ENCODE measurements at regions of chr19 and their contacts with region 1.

Region 1: GRCh38 chr19:1113033-1113985 is 9.5 kb downstream of the GPX4 start:
- DNase-seq: peak; percentile 97 to 98
- ATAC-seq: peak; percentile 87 to 95 (median 93)
- H3K4me3 ChIP-seq: peak overlapping the region in 6 of 10 donors; percentile 9 to 40 (median 21)
- H3K27ac ChIP-seq: peak overlapping the region in 9 of 10 donors; percentile 40 to 79 (median 71)
- H3K4me1 ChIP-seq: peaks cover 12 to 31% (median 19%) of the 10 kb centered on the region in 9 donors
- H3K27me3 ChIP-seq: no peaks in the 10 kb centered on the region
- CTCF ChIP-seq: peak in 8 of 9 donors; percentile 88 to 100 (median 96)

Region 2: GRCh38 chr19:1026189-1027019 is 86.9 kb before region 1 on chr19 and contains the start of gene CNN2:
- intact Hi-C with region 1: no loop called
- DNase-seq: peak; percentile 78 to 82
- ATAC-seq: peak; percentile 55 to 89 (median 77)
- H3K4me3 ChIP-seq: peak within 1 kb of the TSS; percentile 63 to 97 (median 90)
- H3K27ac ChIP-seq: peak within 1 kb of the TSS; percentile 86 to 99 (median 97)
- H3K4me1 ChIP-seq: peaks cover 14 to 59% (median 45%) of the 10 kb centered on the region in 9 donors
- H3K27me3 ChIP-seq: no peaks in the 10 kb centered on the region
- CTCF ChIP-seq: no peak
- total RNA-seq, gene CNN2: 33.0 to 117 (median 63.5) TPM

Region 3: GRCh38 chr19:1151917-1152617 is 38.8 kb after region 1 on chr19:
- intact Hi-C with region 1: loop called in 1 of 10 experiments (anchors 2 kb)
- DNase-seq: peak; percentile 61 to 84
- ATAC-seq: peak; percentile 53 to 82 (median 68)
- H3K4me3 ChIP-seq: peak overlapping the region in 8 of 10 donors; percentile 4 to 37 (median 27)
- H3K27ac ChIP-seq: peak overlapping the region; percentile 4 to 93 (median 76)
- H3K4me1 ChIP-seq: peaks cover 29 to 68% (median 60%) of the 10 kb centered on the region in 9 donors
- H3K27me3 ChIP-seq: no peaks in the 10 kb centered on the region
- CTCF ChIP-seq: no peak

Region 4: GRCh38 chr19:1173845-1174809 is 60.8 kb after region 1 on chr19 and contains the start of gene SBNO2:
- intact Hi-C with region 1: loop called in 1 of 10 experiments (anchors 5 kb)
- DNase-seq: peak; percentile 87 to 93
- ATAC-seq: peak; percentile 78 to 92 (median 87)
- H3K4me3 ChIP-seq: peak within 1 kb of the TSS; percentile 71 to 96 (median 80)
- H3K27ac ChIP-seq: peak within 1 kb of the TSS; percentile 70 to 98 (median 92)
- H3K4me1 ChIP-seq: peaks cover 0 to 74% (median 20%) of the 10 kb centered on the region in 9 donors
- H3K27me3 ChIP-seq: no peaks in the 10 kb centered on the region
- CTCF ChIP-seq: no peak
- total RNA-seq, gene SBNO2: 12.6 to 61.3 (median 16.1) TPM

Region 5: DNA sequence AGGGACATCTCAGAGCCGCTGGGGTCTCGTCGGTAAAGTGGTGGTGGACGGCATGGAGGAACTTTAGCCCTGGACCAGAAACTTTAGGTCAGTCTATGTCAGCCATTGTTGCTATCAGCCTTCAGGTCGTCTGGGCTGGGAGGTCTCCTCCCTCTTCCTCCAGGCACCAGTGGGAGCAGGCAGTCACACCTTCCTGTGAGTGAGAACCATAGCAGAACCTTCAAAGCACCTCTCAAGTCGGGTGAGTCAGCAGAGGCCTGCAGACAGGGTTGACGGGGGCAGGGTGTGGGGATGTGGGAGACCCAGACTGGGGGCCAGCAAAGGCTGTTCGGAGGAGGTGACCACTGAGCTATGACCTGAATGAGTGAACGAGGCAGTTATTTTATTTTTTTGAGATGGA is 76.1 kb after region 1 on chr19:
- intact Hi-C with region 1: loop called in 9 of 10 experiments (anchors 5 kb)
- DNase-seq: no peak
- ATAC-seq: no peak
- H3K4me3 ChIP-seq: no peak overlapping the region
- H3K27ac ChIP-seq: no peak overlapping the region
- H3K4me1 ChIP-seq: peaks cover 0 to 8% (median 0%) of the 10 kb centered on the region in 9 donors
- H3K27me3 ChIP-seq: no peaks in the 10 kb centered on the region
- CTCF ChIP-seq: no peak

Measured in heart right ventricle (tissue), 16 donors.